GM12878 (cell line): ENCODE measurements at regions of chr5 and their contacts with region 1.

Region 1: GRCh38 chr5:130424341-130424740 is 520.1 kb downstream of the CHSY3 start:
- DNase-seq: no peak
- ATAC-seq: no peak
- H3K4me3 ChIP-seq: no peak overlapping the region
- H3K27ac ChIP-seq: no peak overlapping the region
- H3K4me1 ChIP-seq: no peaks in the 10 kb centered on the region
- H3K27me3 ChIP-seq: no peaks in the 10 kb centered on the region
- CTCF ChIP-seq: no peak
- EP300 ChIP-seq: no peak
- POLR2A ChIP-seq: no peak
- RAD21 ChIP-seq: no peak

Region 2: DNA sequence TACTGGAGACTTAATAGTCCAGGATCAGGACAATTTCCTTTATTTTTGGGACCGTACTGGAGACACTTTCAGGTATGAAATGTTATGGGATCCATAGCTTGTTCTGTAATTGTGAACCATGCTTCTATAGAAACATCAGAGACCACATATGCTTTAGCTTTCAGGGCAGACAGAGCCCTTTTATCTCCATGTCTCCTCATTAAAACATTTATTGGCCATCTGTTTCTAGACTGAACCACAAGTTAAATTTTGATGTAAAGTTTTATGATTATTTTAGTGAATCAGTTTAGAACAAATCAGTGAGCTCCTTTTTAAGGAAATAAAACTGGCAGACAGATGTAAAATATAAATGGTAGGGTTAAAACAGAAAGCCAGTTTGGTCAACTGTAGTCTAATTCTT is 1397.1 kb before region 1 on chr5:
- CTCF ChIA-PET with region 1: no interaction called
- POLR2A ChIA-PET with region 1: no interaction called
- RAD21 ChIA-PET with region 1: no interaction called
- SMC1A ChIA-PET with region 1: no interaction called
- in situ Hi-C with region 1: no loop called
- intact Hi-C with region 1: no loop called
- DNase-seq: no peak
- ATAC-seq: no peak
- H3K4me3 ChIP-seq: no peak overlapping the region
- H3K27ac ChIP-seq: no peak overlapping the region
- H3K4me1 ChIP-seq: no peaks in the 10 kb centered on the region
- H3K27me3 ChIP-seq: no peaks in the 10 kb centered on the region
- CTCF ChIP-seq: no peak
- EP300 ChIP-seq: no peak
- POLR2A ChIP-seq: no peak
- RAD21 ChIP-seq: no peak

Region 3: DNA sequence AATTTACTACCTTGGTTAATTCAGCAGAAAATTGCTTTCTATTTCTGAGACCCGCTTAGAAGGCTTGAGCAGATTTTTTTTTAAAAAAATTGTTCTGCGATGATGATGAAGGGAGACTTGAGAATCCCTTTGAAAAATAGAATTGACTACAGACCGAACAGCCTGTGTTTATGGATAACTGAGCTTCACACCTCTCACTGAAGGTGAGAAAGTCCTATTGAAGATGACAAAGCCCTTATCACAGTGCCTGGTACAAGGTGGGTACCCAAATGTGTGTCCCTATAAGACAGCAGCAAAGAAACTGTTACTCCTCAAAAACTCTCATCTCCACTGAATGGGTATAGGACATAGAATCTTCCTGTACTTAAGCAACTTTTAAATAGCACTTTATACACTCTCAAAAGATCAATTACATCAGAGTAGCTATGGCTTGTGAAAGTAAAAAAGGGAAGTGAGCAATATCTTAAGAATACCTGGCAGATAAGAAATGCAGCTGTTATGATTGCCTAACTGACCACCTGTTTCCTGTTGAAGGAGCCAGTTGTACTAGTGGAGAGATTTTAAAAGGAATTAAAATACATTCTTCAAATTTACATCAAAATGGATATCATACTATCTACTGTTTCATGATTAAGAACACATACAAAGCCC is 100.4 kb before region 1 on chr5:
- CTCF ChIA-PET with region 1: no interaction called
- POLR2A ChIA-PET with region 1: no interaction called
- RAD21 ChIA-PET with region 1: no interaction called
- SMC1A ChIA-PET with region 1: no interaction called
- in situ Hi-C with region 1: no loop called
- intact Hi-C with region 1: no loop called
- DNase-seq: peak; percentile 72
- ATAC-seq: peak; percentile 98
- H3K4me3 ChIP-seq: no peak overlapping the region
- H3K27ac ChIP-seq: peak overlapping the region; percentile 70
- H3K4me1 ChIP-seq: peaks cover 14% of the 10 kb centered on the region
- H3K27me3 ChIP-seq: no peaks in the 10 kb centered on the region
- CTCF ChIP-seq: no peak
- EP300 ChIP-seq: peak; percentile 95 to 97
- POLR2A ChIP-seq: no peak
- RAD21 ChIP-seq: no peak

Region 4: GRCh38 chr5:130436430-130436829 is 12.1 kb after region 1 on chr5:
- CTCF ChIA-PET with region 1: no interaction called
- POLR2A ChIA-PET with region 1: no interaction called
- RAD21 ChIA-PET with region 1: no interaction called
- SMC1A ChIA-PET with region 1: no interaction called
- in situ Hi-C with region 1: no loop called
- intact Hi-C with region 1: no loop called
- DNase-seq: no peak
- ATAC-seq: no peak
- H3K4me3 ChIP-seq: no peak overlapping the region
- H3K27ac ChIP-seq: no peak overlapping the region
- H3K4me1 ChIP-seq: no peaks in the 10 kb centered on the region
- H3K27me3 ChIP-seq: no peaks in the 10 kb centered on the region
- CTCF ChIP-seq: no peak
- EP300 ChIP-seq: no peak
- POLR2A ChIP-seq: no peak
- RAD21 ChIP-seq: no peak

Region 5: DNA sequence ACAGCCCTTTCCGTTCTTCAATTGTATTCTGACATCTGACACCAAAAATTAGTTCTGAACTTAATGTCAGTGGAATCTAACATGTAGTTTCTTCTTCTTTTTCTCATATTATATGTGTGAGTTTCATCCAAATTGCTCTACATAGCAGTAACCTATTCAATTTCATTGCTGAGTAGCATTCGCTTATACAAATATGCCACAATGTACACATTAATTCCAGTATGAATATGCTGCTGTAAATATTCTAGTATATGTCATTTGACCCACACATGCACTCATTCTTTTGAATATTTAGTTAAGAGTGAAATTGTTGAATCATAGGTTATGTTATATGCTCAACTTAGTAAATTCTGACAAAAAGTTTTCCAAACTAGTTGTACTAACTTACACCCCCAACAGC is 30.8 kb after region 1 on chr5:
- CTCF ChIA-PET with region 1: no interaction called
- POLR2A ChIA-PET with region 1: no interaction called
- RAD21 ChIA-PET with region 1: no interaction called
- SMC1A ChIA-PET with region 1: no interaction called
- in situ Hi-C with region 1: no loop called
- intact Hi-C with region 1: loop called (anchors 1 kb)
- DNase-seq: no peak
- ATAC-seq: no peak
- H3K4me3 ChIP-seq: no peak overlapping the region
- H3K27ac ChIP-seq: no peak overlapping the region
- H3K4me1 ChIP-seq: no peaks in the 10 kb centered on the region
- H3K27me3 ChIP-seq: no peaks in the 10 kb centered on the region
- CTCF ChIP-seq: no peak
- EP300 ChIP-seq: no peak
- POLR2A ChIP-seq: no peak
- RAD21 ChIP-seq: no peak